ENCODE measurements at regions of chr11 and their contacts with region 1.

Region 1: DNA sequence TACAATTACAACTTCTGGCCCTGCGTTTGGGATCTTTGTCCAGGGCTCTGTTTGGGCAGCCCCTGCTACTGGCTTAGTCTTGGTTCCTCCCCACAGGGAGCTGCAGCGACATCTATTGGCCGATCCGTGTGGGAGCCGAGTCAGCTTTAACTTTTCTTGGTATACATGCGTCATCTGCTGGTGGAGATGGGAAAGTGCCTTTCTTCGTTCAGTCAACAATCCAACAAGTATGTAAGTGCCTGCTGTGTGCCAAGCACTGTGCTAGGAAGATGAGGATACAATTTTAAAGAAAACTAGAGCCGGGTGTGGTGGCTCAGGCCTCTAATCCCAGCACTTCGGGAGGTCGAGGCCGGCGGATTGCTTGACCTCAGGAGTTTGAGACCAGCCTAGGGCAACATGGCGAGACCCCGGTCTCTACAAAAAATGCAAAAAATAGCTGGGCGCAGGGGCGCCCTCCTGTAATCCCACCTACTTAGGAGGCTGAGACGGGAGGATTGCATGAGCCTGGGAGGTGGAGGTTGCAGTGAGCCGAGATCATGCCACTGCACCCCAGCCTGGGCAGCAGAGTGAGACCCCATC is 8.2 kb downstream of the TPBGL start:
- DNase-seq: peak; percentile 51
- ATAC-seq: peak; percentile 98
- H3K4me3 ChIP-seq: no peak overlapping the region
- H3K27ac ChIP-seq: no peak overlapping the region
- H3K4me1 ChIP-seq: no peaks in the 10 kb centered on the region
- H3K27me3 ChIP-seq: peaks cover 1 to 3% of the 10 kb centered on the region in 2 experiments; a peak in 3 of 4 replicates
- CTCF ChIP-seq: peak; percentile 100; a peak in 5 of 6 replicates
- EP300 ChIP-seq: no peak
- POLR2A ChIP-seq: no peak
- RAD21 ChIP-seq: peak; percentile 98

Region 2: GRCh38 chr11:74923125-74923524 is 325.7 kb before region 1 on chr11:
- CTCF ChIA-PET with region 1: interaction called, 45 read pairs
- POLR2A ChIA-PET with region 1: no interaction called
- RAD21 ChIA-PET with region 1: no interaction called
- SMC1A ChIA-PET with region 1: no interaction called
- in situ Hi-C with region 1: no loop called
- intact Hi-C with region 1: no loop called
- DNase-seq: no peak
- ATAC-seq: no peak
- H3K4me3 ChIP-seq: no peak overlapping the region
- H3K27ac ChIP-seq: no peak overlapping the region
- H3K4me1 ChIP-seq: no peaks in the 10 kb centered on the region
- H3K27me3 ChIP-seq: no peaks in the 10 kb centered on the region
- CTCF ChIP-seq: no peak
- EP300 ChIP-seq: no peak
- POLR2A ChIP-seq: no peak
- RAD21 ChIP-seq: no peak

Region 3: DNA sequence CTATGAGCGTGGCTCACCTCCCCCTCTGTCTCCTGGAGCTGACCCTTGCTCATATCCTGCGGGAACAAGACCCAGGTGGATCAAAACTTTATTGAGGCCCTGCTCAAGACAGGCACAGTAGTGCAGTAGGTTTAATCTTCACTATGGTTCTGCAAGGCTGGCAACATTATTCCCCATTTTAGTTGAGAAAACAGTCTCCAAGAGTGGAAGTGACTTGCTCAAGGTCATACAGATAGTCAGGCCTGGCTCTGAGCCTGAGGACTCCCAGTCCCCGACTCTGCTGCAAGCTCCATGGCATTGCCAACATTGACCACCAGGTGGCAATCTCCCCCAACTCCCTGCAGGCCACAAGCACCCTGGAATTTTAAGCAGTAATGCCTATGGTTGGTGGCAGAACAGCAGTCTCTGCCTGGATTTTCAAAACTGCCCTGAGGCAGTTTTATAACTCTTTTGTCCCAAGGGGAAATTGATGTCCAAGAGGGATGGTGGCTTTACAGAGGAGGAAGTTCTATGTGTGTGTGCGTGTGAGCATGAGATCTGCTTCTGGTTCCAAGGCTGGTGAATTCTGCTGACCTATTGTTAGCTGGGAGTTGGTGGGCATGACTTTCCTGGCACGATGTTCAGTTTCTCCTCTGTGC is 225.9 kb before region 1 on chr11:
- CTCF ChIA-PET with region 1: interaction called, 30 read pairs
- POLR2A ChIA-PET with region 1: no interaction called
- RAD21 ChIA-PET with region 1: interaction called, 17 read pairs
- SMC1A ChIA-PET with region 1: interaction called, 20 read pairs
- in situ Hi-C with region 1: loop called (anchors 5 kb)
- intact Hi-C with region 1: loop called (anchors 2 kb)
- DNase-seq: peak; percentile 45
- ATAC-seq: peak; percentile 100
- H3K4me3 ChIP-seq: no peak overlapping the region
- H3K27ac ChIP-seq: no peak overlapping the region
- H3K4me1 ChIP-seq: no peaks in the 10 kb centered on the region
- H3K27me3 ChIP-seq: no peaks in the 10 kb centered on the region
- CTCF ChIP-seq: peak; percentile 94 to 98 (median 96); a peak in 5 of 6 replicates
- EP300 ChIP-seq: no peak
- POLR2A ChIP-seq: no peak
- RAD21 ChIP-seq: peak; percentile 95

Region 4: GRCh38 chr11:75147875-75148263 is 100.9 kb before region 1 on chr11:
- CTCF ChIA-PET with region 1: interaction called, 129 read pairs
- POLR2A ChIA-PET with region 1: no interaction called
- RAD21 ChIA-PET with region 1: interaction called, 4 read pairs
- SMC1A ChIA-PET with region 1: interaction called, 6 read pairs
- in situ Hi-C with region 1: loop called (anchors 5 kb)
- intact Hi-C with region 1: loop called (anchors 1 kb)
- DNase-seq: no peak
- ATAC-seq: no peak
- H3K4me3 ChIP-seq: no peak overlapping the region
- H3K27ac ChIP-seq: no peak overlapping the region
- H3K4me1 ChIP-seq: peaks cover 12% of the 10 kb centered on the region
- H3K27me3 ChIP-seq: no peaks in the 10 kb centered on the region
- CTCF ChIP-seq: no peak
- EP300 ChIP-seq: no peak
- POLR2A ChIP-seq: no peak
- RAD21 ChIP-seq: no peak

Region 5: GRCh38 chr11:75214411-75214821 is 34.4 kb before region 1 on chr11:
- CTCF ChIA-PET with region 1: interaction called, 10 read pairs
- POLR2A ChIA-PET with region 1: no interaction called
- RAD21 ChIA-PET with region 1: no interaction called
- SMC1A ChIA-PET with region 1: no interaction called
- in situ Hi-C with region 1: no loop called
- intact Hi-C with region 1: no loop called
- DNase-seq: peak; percentile 7
- ATAC-seq: peak; percentile 75
- H3K4me3 ChIP-seq: no peak overlapping the region
- H3K27ac ChIP-seq: no peak overlapping the region
- H3K4me1 ChIP-seq: no peaks in the 10 kb centered on the region
- H3K27me3 ChIP-seq: no peaks in the 10 kb centered on the region
- CTCF ChIP-seq: no peak
- EP300 ChIP-seq: no peak
- POLR2A ChIP-seq: no peak
- RAD21 ChIP-seq: no peak

Region 6: DNA sequence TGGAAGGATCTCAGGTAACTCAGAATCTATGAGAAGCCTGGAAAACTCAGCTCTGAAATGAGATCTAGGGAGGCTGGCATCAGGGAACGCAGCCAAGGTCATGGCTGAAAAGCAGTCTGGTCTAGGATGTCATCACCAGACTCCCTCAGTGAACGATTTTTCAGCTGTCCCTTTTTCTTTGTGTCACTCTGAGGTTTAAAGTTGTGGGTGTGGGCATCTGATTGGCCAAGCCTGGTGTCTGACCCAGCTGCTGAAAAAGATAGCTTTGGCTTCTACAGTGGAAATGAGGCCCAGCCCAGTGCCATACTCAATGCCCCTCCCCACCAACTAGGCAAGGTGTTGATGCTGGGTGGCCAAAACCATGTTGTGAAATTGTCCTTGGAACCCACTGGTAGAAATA is 165.1 kb after region 1 on chr11:
- CTCF ChIA-PET with region 1: no interaction called
- POLR2A ChIA-PET with region 1: no interaction called
- RAD21 ChIA-PET with region 1: no interaction called
- SMC1A ChIA-PET with region 1: no interaction called
- in situ Hi-C with region 1: no loop called
- intact Hi-C with region 1: no loop called
- DNase-seq: no peak
- ATAC-seq: no peak
- H3K4me3 ChIP-seq: no peak overlapping the region
- H3K27ac ChIP-seq: no peak overlapping the region
- H3K4me1 ChIP-seq: no peaks in the 10 kb centered on the region
- H3K27me3 ChIP-seq: no peaks in the 10 kb centered on the region
- CTCF ChIP-seq: no peak
- EP300 ChIP-seq: no peak
- POLR2A ChIP-seq: no peak
- RAD21 ChIP-seq: no peak

Measured in GM12878 (cell line).